ENCODE measurements at regions of chr7 and their contacts with region 1.

Region 1: DNA sequence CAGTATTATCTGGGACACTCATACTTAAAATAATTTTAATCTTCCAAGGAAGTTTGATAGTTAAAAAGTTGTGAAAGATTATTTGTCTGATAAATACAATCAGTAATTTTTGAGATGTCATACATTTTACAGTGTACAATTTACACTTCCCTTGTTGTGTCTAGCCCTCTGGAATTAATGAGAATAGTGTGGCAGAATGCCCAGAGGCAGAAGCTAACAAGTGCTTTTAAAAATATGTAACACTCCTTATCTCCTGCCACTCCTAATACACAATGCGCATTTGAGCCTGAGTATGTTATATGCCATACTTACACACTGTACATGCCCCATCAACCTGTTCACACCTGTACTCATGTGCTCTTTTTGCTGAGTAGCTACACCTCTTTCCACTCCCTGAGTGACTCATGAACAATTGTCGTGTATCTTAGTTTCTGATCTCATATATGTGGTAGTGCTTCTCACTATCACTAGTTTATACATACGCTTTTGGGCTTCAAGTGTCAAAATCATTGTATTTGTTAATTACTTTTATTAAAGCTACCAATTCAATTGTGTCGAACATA is 106.9 kb upstream of the GNAI1 start:
- DNase-seq: no peak
- H3K4me3 ChIP-seq: no peak overlapping the region
- H3K27ac ChIP-seq: no peak overlapping the region
- H3K4me1 ChIP-seq: no peaks in the 10 kb centered on the region
- H3K27me3 ChIP-seq: no peaks in the 10 kb centered on the region

Region 2: DNA sequence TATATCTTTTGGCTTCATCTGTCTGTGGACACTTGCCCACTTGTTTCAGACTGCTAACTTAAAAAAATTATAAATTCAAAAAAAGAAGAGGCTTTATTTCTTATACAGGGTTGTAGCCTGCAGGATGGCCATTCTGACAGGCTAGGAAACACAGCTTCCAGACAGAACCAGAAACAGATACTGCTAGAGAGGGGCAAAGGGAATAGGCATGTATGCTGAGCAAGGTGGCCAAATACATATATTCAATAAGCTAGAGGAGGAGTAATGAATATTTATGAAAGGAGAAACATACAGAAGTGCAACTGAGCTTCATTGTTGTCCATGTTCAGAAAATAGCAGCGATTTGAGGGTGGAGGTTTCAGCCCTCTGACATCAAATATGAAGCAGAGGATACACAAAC is 552.2 kb before region 1 on chr7:
- in situ Hi-C with region 1: no loop called
- DNase-seq: no peak
- H3K4me3 ChIP-seq: no peak overlapping the region
- H3K27ac ChIP-seq: no peak overlapping the region
- H3K4me1 ChIP-seq: 0 out of 2 replicates have a peak, but pooled peaks cover 7% of the 10 kb centered on the region
- H3K27me3 ChIP-seq: no peaks in the 10 kb centered on the region

Region 3: DNA sequence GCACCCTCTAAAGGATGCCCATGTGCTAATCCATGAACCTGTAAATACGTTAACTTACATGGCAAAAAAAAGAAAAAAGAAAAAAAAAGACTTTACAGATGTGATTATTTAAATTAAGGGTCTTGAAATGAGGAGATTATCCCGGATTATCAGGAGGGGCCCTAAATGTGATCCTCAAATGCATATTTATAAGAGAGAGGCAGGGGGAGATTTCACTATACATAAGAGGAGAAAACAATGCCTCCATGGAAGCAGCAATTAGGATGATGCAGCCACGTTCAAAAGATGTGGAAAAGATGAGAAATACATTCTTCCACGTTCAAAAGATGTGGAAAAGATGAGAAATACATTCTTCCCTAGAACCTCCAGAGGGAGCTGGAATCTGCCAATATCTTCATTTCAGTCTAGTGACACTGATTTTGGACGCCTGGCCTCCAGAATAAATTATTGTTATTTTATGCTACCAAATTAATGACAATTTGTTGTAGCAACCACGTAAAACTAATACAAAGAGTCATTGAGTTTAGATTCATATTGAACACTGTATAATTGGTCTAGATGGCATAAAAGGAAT is 221.4 kb before region 1 on chr7:
- in situ Hi-C with region 1: loop called (anchors 10 kb)
- DNase-seq: peak; percentile 71
- H3K4me3 ChIP-seq: no peak overlapping the region
- H3K27ac ChIP-seq: no peak overlapping the region
- H3K4me1 ChIP-seq: no peaks in the 10 kb centered on the region
- H3K27me3 ChIP-seq: no peaks in the 10 kb centered on the region

Region 4: DNA sequence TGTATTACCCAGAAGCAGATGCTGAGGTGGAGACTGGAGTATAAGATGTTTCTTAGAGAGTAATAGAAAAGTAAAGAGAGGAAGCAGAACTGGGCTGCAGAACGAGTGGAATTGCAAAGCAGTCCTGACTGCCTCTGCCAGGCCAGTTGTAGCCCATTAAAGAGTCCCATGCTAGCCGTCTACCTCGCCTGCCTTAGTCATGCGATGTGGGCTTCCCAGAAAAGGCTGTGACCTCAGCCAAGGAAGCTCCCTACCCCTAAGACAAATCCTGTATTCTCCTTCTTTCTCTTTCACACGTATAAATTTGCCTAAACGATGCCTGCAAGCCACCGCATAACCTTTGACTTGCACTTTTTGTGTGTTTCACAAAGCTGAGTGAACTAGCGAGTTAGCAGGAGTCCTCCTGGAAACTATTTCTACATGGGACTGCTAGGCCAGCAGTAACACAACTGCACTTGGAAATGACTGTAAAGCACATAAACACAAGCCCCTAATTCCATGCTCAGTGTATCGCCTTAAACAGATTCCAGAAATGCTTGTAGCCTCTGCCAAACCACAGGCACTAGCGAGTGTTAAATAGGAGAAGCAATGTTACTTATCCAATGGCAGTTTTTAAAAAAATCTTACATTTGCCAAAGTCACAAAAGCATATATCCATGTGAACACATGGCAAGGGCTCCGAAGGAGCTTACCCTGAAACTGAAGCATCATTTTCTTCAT is 59.5 kb after region 1 on chr7:
- in situ Hi-C with region 1: no loop called
- DNase-seq: peak; percentile 32
- H3K4me3 ChIP-seq: no peak overlapping the region
- H3K27ac ChIP-seq: no peak overlapping the region
- H3K4me1 ChIP-seq: peaks cover 35% of the 10 kb centered on the region
- H3K27me3 ChIP-seq: no peaks in the 10 kb centered on the region

Region 5: DNA sequence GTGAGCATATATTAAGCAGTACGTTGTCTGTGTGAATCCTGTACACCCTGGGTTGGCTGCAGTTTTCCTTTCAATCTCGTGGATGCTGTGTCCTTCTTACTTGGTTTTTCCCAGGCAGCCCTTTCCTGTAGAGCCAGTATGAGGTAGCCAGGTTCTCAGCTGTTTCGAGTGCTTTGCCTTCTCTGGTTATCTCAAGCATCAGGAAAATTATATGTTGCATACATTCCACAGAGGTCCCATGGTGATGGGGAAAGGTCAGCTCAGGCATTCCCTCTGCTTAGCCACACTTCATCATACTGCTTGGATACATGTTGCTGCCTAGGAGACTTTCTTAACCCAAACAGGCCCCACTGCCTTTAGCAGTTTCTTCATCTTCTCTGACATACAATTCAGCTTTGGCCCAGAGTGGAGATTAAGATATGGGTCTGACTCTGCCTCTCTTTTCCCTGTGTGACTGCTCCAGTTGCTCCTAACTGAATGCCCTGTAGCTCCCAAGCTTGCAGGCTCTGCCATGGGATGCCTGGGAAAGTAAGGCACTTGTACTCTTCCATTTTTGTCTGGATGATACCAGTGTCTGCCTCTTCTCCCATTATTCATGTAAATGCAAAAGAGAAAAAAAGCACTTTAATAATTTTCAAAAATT is 118.2 kb after region 1 on chr7:
- in situ Hi-C with region 1: no loop called
- DNase-seq: peak; percentile 79
- H3K4me3 ChIP-seq: peak overlapping the region; percentile 43; the same call in 1 of the 2 replicates
- H3K27ac ChIP-seq: peak overlapping the region; percentile 74
- H3K4me1 ChIP-seq: peaks cover 49% of the 10 kb centered on the region
- H3K27me3 ChIP-seq: no peaks in the 10 kb centered on the region

Measured in GM23248 (cell line).